Posterior cingulate gyrus (tissue), 11 donors: ENCODE measurements at regions of chr9 and their contacts with region 1.

Region 1: GRCh38 chr9:4984621-4985385 is at the start of gene JAK2:
- DNase-seq: peak; percentile 75 to 97 (median 86)

Region 2: DNA sequence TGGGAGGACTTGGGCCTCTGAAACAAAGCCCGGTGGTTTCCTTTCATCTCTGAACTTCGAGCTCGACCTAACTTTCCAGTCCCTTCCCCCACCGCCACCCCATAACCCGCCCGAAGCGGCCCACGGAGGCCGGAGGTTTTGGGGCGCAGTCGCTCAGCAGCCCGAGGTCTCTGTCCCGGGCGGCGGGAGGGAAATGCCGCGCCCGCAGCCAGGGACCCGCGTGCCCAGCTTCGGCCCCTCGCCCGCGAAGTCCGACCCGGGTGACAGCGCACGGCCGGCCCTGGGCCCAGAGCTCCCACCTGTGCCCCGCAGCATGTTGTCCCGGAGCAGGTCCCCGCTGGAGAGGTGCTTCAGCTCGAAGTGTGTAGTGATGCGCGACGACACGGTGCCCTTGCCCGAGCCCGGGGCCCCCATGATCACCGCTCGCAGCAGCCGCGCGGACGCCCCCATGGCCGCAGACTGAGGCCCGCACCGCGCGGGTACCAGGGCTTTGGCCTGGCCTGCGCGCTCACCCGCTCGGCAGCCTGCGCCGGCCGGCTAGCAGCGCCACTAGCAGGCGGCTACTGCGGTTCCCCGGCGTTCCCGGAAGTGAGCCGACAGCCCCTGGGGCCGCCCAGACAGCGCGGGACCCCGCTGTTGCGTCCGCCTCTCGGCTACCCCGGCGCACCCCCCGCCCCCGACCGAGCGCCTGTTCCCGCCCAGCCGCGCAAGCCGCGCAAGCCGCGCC is 244.0 kb before region 1 on chr9 and contains the start of gene AK3:
- intact Hi-C with region 1: loop called (anchors 5 kb)
- DNase-seq: peak; percentile 69 to 97 (median 82)

Region 3: DNA sequence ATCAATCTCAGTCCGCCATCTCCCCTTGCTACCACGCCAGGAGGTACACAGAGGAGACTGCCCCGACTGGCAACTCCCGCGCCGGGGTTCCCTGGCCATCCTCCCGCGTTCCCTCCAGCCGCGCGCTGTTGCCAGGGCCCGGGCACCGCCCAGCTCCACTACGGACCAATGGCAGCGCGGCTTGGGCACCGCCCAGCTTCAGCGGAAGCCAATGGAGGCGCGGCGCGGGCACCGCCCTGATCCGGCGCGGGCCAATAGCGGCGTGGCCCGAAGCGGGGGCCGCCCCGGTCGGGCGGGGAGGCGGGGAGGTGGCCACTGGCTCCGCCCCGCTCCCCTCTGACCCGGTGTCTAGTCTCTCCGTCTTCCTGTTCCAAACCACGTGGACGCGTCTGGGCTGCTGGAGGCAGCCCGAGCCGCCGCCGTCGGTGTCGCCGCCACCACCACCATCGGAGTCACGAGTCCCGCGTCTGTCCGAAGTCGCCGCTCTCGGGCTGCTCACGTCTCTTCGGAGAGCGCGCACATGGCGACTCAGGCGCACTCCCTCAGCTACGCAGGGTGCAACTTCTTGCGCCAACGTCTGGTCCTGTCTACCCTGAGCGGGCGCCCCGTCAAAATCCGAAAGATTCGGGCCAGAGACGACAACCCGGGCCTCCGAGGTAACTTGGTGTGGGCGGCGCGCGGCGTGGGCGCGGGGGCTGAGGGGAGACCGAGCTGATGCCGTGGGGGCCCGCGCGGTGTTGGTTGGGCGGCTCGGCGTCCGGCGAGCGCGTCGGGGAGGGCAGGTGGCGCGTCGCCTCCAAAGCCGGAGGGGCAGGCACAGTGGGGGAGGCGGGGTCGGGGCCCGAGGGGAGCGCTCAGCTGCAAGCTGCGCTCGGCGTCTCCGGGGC is 192.0 kb before region 1 on chr9 and contains the start of gene RCL1:
- intact Hi-C with region 1: loop called (anchors 2 kb)
- DNase-seq: peak; percentile 95 to 100 (median 98)

Region 4: GRCh38 chr9:4832786-4833579 is 151.8 kb before region 1 on chr9:
- intact Hi-C with region 1: no loop called
- DNase-seq: peak in 1 of 10 donors; percentile 55

Region 5: GRCh38 chr9:4970970-4971641 is 13.7 kb before region 1 on chr9:
- intact Hi-C with region 1: no loop called
- DNase-seq: peak in 1 of 10 donors; percentile 24

Region 6: DNA sequence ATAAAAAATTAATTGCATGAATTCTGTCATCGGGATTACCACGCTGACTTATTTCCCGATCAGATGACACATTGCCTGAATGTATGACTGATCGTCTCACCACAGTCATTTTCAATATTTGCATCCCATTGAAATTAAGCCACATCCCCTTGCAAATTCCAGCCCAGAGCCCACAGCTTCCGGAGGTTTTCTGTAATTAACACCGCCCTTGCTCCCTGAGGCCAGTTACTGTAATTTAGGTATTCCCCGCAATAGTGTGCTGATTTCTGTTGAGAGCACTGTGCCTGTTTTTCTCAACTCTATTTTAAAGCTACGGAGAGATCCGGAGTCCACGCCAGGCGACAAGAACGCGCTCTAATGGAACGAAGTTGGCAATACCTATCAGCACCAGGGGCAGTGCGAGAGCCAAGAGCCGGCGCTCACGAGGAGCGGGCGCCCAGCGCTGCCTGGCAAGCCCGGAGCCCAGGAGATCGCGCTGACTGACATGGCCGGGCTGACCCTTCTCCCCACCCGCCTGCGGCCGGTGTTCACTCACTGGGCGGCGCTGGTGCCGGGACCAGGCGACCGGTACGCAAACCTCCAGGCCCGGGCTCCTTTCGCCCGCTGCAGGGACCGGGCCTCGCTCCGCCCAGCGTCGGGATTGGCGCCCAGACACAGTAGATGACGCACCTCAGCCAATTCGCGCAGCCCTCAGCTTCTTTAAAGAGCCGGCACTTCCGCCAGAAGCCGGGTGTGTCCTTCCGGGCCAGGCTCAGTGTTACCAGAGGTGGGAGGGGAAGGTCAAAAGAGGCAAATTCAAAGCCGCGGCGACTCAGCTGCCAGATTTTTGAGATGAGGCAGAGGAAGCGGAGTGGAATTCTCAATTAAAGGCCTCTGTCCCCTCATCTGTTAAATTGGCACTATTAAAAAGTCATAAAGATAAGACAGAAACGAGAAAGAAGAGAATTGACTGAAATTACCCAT is 452.7 kb after region 1 on chr9 and contains the start of gene PLGRKT:
- intact Hi-C with region 1: loop called (anchors 10 kb)
- DNase-seq: peak; percentile 92 to 99 (median 96)